Activated B cell treated with CpG ODN at 0.5 μM for 24 hours (primary cell): ENCODE measurements at regions of chr1 and their contacts with region 1.

Region 1: GRCh38 chr1:167291539-167292185 is 71.0 kb downstream of the POU2F1 start:
- DNase-seq: no peak
- ATAC-seq: no peak
- H3K4me3 Mint-ChIP-seq: no peak overlapping the region
- H3K27ac Mint-ChIP-seq: no peak overlapping the region
- H3K4me1 Mint-ChIP-seq: peaks cover 37% of the 10 kb centered on the region
- H3K27me3 Mint-ChIP-seq: no peaks in the 10 kb centered on the region
- CTCF ChIP-seq: no peak

Region 2: GRCh38 chr1:167276969-167277368 is 14.7 kb before region 1 on chr1:
- CTCF ChIA-PET with region 1: no interaction called
- POLR2A ChIA-PET with region 1: no interaction called
- intact Hi-C with region 1: loop called (anchors 2 kb)
- DNase-seq: no peak
- ATAC-seq: no peak
- H3K4me3 Mint-ChIP-seq: no peak overlapping the region
- H3K27ac Mint-ChIP-seq: no peak overlapping the region
- H3K4me1 Mint-ChIP-seq: peaks cover 39% of the 10 kb centered on the region
- H3K27me3 Mint-ChIP-seq: no peaks in the 10 kb centered on the region
- CTCF ChIP-seq: no peak